Activated T-helper 1 cell treated with anti-CD3 and anti-CD28 coated beads, Interleukin-12 subunit alpha, Interleukin-12 subunit beta, Interleukin-2, Interleukin-4 antibody, amounts not matched to agents 30 ng/mL and 10 ng/mL and 1 ng/mL, durations not matched to agents 14 hours and 24 hours and 36 hours (primary cell): ENCODE measurements at regions of chr14 and their contacts with region 1.

Region 1: GRCh38 chr14:105300792-105301533 is at the start of gene BRF1:
- DNase-seq: peak; percentile 97
- H3K4me3 Mint-ChIP-seq: peak within 1 kb of the TSS; percentile 91
- H3K27ac Mint-ChIP-seq: peak within 1 kb of the TSS; percentile 91
- H3K4me1 Mint-ChIP-seq: peaks cover 36% of the 10 kb centered on the region
- H3K27me3 Mint-ChIP-seq: peaks cover 4% of the 10 kb centered on the region
- total RNA-seq, gene BRF1: 46.1 and 46.9 TPM in 2 replicates

Region 2: GRCh38 chr14:105020815-105021655 is 279.9 kb before region 1 on chr14 and contains the start of gene CDCA4:
- intact Hi-C with region 1: loop called (anchors 1 kb)
- DNase-seq: peak; percentile 97
- H3K4me3 Mint-ChIP-seq: peak within 1 kb of the TSS; percentile 99
- H3K27ac Mint-ChIP-seq: peak within 1 kb of the TSS; percentile 86
- H3K4me1 Mint-ChIP-seq: peaks cover 72% of the 10 kb centered on the region
- H3K27me3 Mint-ChIP-seq: no peaks in the 10 kb centered on the region
- total RNA-seq, gene CDCA4: 62.5 and 63.7 TPM in 2 replicates

Region 3: GRCh38 chr14:105065280-105066228 is 235.4 kb before region 1 on chr14 and contains the start of gene GPR132:
- intact Hi-C with region 1: loop called (anchors 1 kb)
- DNase-seq: peak; percentile 89
- H3K4me3 Mint-ChIP-seq: peak within 1 kb of the TSS; percentile 89
- H3K27ac Mint-ChIP-seq: peak within 1 kb of the TSS; percentile 90
- H3K4me1 Mint-ChIP-seq: peaks cover 62% of the 10 kb centered on the region
- H3K27me3 Mint-ChIP-seq: no peaks in the 10 kb centered on the region
- total RNA-seq, gene GPR132: 24.6 and 24.9 TPM in 2 replicates

Region 4: DNA sequence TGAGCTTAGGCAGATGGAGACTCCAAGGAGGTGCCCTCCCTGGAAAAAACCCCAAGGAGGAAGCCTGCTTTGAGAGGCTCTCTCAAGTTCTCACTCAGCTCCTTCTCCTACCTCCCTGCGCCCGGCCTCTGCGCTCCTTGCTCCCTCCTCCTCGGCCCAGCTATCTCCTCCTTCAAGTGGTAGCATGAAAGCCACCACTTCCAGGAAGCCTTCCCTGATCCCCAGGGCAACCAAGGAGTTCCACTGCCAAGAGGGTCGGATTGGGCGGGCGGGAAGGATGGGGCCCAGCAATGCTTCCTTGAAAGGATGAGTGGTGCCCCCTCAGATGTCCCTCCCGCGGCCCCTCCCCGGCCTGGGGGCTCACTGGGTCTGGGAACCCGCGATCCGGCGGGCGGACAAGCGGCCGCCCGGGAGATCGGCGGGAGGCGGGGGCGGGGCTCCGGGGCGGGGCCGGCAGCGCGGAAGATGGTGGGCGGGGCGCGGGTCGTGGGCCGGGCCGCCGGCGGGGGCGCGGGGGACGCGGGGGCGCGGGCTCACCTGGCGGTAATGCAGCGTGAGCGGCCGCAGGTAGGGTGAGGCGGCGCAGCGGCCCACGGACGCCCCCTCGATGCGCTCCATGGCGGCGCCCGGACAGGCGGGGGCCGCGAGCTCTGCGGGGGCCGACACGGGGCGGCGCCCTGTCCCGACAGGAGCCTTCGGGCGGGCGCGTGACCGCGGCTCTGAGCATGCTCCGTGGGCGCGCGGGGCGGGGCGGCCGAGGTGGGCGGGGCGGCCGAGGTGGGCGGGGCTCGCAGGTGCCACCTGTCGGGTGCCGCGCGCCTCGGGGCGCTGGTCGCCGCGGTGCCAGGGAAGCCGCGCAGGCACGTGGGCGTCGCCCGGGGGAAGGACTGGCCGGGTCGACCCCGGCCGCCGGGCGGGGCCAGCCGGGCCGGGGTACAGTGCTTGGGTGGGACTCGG is 120.1 kb before region 1 on chr14 and contains the start of gene NUDT14:
- intact Hi-C with region 1: loop called (anchors 5 kb)
- DNase-seq: peak; percentile 72
- H3K4me3 Mint-ChIP-seq: peak within 1 kb of the TSS; percentile 72
- H3K27ac Mint-ChIP-seq: no peak within 1 kb of the TSS
- H3K4me1 Mint-ChIP-seq: peaks cover 5% of the 10 kb centered on the region
- H3K27me3 Mint-ChIP-seq: peaks cover 17% of the 10 kb centered on the region
- total RNA-seq, gene NUDT14: 8.5 and 10.9 TPM in 2 replicates

Region 5: DNA sequence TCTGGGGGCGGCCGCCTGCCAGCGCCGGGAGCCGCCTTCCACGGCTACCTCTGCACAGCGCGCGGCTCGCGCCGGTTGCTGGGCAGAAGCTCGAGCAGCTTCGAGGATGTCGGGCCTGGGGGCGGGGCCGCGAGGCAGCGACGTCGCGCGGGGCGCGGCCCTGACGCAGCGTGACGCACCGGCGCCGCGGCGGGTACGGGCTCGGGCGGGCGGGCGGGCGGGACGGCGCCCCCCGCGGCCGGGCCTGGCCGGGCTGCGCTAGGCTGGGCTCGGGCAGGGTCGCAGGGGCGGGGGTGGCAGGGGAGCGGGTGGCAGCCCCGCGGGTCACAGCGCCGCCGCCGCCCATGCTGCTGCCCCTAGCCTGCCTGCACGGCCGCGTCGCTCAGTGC is 52.6 kb before region 1 on chr14 and contains the start of gene BTBD6:
- intact Hi-C with region 1: loop called (anchors 10 kb)
- DNase-seq: peak; percentile 87
- H3K4me3 Mint-ChIP-seq: peak within 1 kb of the TSS; percentile 83
- H3K27ac Mint-ChIP-seq: peak within 1 kb of the TSS; percentile 87
- H3K4me1 Mint-ChIP-seq: peaks cover 16% of the 10 kb centered on the region
- H3K27me3 Mint-ChIP-seq: no peaks in the 10 kb centered on the region
- total RNA-seq, gene BTBD6: 41.1 and 41.9 TPM in 2 replicates

Region 6: DNA sequence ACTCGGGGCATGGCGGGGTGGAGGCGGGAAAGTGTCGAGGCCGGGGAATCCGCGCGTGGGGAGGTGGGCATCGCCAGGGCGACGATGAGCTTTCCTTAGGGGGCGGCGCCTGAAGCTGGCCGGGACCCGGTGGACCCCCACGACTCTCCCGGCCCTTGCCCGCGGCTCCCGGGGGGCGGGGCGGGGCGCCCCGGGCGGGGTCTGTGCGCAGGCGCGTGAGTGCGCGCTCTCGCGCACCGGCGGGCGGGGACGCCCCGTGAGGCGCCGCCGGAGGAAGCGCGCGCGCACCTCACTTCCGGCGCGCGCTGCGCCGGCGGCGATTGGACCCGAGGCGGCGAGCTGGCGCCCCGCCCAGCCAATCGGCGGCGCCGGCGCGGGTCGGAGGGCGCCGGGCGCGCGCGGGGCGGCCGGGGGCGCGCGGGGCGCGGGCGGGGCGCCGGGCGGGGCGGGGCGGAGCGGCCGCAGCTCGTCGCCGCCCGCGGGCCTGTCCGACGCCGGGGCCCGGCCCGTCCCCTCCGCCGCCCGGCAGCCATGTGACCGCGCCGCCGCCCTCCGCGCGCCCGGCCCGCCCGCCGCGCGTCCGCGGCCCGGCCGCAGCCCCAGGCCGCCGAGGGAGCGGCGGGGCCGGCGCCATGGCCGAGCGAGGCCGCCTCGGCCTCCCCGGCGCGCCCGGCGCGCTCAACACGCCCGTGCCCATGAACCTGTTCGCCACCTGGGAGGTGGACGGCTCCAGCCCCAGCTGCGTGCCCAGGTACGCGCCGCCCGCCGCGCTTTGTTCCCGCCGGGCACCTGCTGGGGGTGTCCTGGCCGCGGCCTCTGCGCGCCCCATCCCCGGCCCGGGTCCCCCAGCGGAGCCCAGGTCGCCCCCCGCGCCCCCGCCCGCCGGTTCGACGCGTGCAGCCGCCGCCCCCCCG is 13.6 kb after region 1 on chr14 and contains the start of gene PACS2:
- intact Hi-C with region 1: loop called (anchors 1 kb)
- DNase-seq: peak; percentile 78
- H3K4me3 Mint-ChIP-seq: peak within 1 kb of the TSS; percentile 90
- H3K27ac Mint-ChIP-seq: peak within 1 kb of the TSS; percentile 80
- H3K4me1 Mint-ChIP-seq: peaks cover 21% of the 10 kb centered on the region
- H3K27me3 Mint-ChIP-seq: peaks cover 11% of the 10 kb centered on the region
- total RNA-seq, gene PACS2: 28.2 and 32.3 TPM in 2 replicates

Region 7: DNA sequence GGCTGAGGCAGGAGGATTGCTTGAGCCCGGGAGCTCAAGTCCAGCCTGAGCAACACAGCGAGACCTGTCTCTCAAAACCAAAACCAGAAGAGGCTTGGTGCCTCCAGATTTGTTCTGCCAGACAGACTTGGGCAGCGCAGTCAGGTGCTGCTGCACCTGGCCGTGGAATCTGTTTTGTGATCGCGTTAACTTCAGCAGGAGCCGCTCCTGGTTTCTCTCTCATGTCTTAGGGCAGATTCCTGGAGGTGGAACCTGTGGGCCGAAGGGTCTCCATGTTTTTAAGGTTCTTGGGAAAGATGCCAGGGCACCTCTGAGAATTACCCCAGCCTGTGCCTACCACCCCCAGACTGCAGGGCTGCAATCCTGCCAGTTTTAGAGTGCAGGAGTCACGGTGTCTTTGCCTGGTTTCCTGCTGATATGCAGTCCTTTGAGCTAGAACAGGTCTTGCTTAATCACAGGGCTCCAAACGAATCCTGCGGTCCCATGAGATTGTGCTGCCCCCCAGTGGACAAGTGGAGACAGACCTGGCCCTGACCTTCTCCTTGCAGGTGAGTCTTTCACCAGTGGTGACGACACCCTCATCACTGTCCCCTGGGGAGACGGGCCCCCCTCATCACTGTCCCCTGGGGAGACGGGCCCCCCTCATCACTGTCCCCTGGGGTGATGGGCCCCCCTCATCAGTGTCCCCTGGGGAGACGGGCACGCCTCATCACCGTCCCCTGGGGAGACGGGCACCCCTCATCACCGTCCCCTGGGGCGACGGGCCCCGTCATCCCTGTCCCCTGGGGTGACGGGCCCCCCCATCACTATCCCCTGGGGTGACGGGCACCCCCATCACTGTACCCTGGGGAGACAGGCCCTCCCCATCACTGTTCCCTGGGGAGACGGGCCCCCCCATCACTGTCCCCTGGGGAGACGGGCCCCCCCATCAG is 51.2 kb after region 1 on chr14:
- intact Hi-C with region 1: loop called (anchors 5 kb)
- DNase-seq: peak; percentile 82
- H3K4me3 Mint-ChIP-seq: no peak overlapping the region
- H3K27ac Mint-ChIP-seq: no peak overlapping the region
- H3K4me1 Mint-ChIP-seq: peaks cover 4% of the 10 kb centered on the region
- H3K27me3 Mint-ChIP-seq: no peaks in the 10 kb centered on the region